ENCODE measurements at regions of chr10 and their contacts with region 1.

Region 1: GRCh38 chr10:35126530-35127296 is at the start of gene CREM:
- DNase-seq: peak; percentile 99 to 100
- ATAC-seq: peak; percentile 93
- total RNA-seq, gene CREM: 11.3 to 14.5 TPM

Region 2: GRCh38 chr10:35195361-35196306 is 68.9 kb after region 1 on chr10:
- intact Hi-C with region 1: loop called in 1 of 2 experiments (anchors 2 kb)
- DNase-seq: peak; percentile 67 to 79
- ATAC-seq: peak; percentile 98

Region 3: DNA sequence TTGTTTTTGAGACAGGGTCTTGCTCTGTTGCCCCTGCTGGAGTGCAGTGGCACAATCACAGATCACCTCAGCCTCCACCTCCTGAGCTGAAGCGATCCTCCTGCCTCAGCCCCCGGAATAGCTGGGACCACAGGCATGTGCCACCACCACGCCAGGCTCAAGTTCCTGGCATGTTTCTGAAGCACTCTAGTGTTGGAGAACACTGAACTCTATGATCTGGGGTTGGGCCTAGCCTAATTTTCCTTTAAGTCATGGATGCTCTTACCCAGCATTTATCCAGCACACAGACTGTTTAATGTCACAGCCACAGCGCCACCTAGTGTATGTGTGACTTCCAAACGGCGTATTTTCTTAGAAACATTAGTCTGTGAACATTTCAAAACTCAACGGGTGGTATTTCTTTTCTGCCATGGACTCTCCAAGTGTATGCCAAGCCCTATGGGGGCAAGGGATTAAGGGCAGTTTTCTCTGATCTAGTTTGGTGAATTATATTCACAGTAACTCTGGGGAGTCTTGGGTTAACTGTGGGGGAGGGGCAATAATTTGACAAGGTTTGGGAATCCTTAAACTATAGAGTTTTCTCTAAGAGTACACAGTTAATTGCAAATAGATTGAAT is 91.7 kb after region 1 on chr10:
- intact Hi-C with region 1: loop called (anchors 5 to 10 kb)
- DNase-seq: peak; percentile 64 to 92
- ATAC-seq: peak; percentile 81